Aorta (tissue), 5 donors: ENCODE measurements at regions of chr7 and their contacts with region 1.

Region 1: GRCh38 chr7:90211391-90212148 is at the start of gene STEAP2:
- DNase-seq: peak; percentile 94 to 97
- ATAC-seq: peak; percentile 99
- H3K4me3 ChIP-seq: peak within 1 kb of the TSS; percentile 49 to 55
- H3K27ac ChIP-seq: peak within 1 kb of the TSS; percentile 20 to 79
- H3K4me1 ChIP-seq: peaks cover 0 to 2% of the 10 kb centered on the region in 2 donors
- H3K27me3 ChIP-seq: no peaks in the 10 kb centered on the region
- total RNA-seq, gene STEAP2: 36.2 to 73.2 TPM

Region 2: DNA sequence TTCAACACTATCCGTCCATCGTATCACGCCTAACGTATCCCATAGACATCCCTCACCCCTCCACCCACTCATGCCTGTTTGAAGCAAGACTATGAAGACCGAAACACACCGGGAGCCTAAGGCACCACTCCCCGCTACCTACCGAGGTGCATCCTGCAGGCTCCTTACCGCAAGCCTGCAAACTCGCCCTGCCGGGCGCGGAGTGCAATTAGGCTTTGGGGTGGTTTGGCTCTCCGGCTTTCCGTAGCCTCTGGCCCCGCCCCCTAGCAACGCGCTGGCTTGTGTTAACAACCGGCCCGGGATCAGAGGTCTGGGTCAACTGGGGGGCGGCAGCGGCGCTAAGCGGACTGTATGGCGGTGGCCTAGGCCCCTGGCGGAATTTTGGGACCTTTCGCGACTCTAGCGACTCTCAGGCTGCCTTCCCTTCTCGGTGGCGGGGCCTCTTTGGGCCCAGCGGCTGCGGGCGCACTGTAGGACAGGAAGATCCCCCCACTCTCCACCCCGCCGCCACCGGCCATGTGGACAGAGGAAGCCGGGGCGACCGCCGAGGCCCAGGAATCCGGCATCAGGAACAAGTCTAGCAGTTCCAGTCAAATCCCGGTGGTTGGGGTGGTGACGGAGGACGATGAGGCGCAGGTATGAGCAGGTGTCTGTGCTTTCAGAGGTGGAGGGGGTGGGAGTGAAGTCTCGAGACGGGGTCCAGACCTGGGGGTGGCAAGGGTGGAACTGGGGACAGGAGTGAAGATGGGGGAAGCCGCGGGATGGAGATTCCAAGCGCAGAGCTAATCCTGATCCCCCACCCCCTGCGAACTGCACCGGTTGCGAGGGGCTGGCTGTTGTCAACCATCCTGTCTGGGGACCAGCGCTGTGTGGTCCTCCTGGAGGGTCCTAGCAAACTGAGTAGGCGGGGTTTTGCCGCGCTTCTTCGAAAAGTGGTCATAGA is 33.6 kb after region 1 on chr7 and contains the start of gene CFAP69:
- intact Hi-C with region 1: loop called (anchors 2 to 5 kb)
- DNase-seq: peak; percentile 94 to 97
- ATAC-seq: peak; percentile 98
- H3K4me3 ChIP-seq: peak within 1 kb of the TSS; percentile 71
- H3K27ac ChIP-seq: no peak within 1 kb of the TSS
- H3K4me1 ChIP-seq: peaks cover 0 to 3% of the 10 kb centered on the region in 2 donors
- H3K27me3 ChIP-seq: no peaks in the 10 kb centered on the region
- total RNA-seq, gene CFAP69: 11.4 to 15.8 TPM

Region 3: DNA sequence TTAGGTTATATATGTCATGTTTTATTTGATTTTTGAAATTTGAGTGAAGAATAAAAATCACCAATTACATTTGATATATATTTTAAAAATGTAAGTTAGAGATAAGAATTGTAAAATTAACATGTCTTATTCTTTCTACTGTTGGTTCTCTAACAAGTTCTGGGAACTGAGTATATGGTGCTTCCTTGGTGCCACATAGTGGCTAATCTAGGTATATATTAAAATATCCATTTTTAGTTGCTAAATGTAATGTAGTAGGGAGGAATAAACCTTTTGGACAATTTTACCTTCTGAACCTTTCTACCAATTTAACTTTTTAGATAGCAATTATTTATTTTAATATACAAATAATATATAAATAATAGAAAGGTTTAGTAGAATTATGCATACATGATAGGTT is 50.9 kb after region 1 on chr7:
- intact Hi-C with region 1: loop called in 1 of 2 experiments (anchors 2 kb)
- DNase-seq: no peak
- ATAC-seq: no peak
- H3K4me3 ChIP-seq: no peak overlapping the region
- H3K27ac ChIP-seq: no peak overlapping the region
- H3K4me1 ChIP-seq: peaks cover 0 to 4% of the 10 kb centered on the region in 2 donors
- H3K27me3 ChIP-seq: no peaks in the 10 kb centered on the region

Region 4: DNA sequence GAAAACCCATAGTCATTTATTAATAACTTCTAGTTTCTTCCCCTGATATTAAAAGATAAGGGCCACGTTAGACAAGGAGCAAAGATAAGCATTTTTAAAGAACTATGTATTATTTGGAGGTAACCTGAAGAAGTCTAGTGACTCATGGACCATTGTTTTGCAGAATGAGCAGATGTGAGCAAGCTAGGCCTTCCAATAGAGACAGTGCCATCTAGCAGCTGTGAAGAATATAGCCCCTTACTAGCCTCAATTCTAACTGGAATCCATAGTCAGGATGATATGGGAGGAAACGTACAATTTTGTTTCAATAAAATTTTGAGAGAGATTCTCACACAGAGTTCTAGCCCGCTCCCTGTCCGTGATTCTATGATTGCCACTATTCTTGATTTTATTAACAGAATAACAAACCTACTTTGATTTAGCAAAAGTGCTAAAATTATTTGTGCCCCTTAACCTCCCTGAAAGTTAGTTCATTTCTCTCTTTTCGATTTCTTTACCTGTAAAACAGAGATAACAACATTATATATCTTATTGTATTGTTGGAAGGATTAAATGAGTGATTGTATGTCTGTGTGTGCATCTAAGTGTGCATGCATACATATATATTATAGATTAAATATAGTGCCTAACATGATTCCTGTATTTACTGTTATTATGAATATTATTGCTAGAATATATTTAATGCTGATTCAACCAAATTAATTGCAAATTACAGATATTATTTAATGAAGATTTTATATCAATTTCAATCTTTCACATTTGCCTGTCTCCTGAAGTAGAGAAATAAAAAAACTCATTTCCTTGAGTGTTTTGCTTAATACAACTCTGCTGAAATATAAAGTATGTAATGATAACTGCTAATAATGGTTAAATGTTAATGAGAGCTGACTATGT is 86.8 kb after region 1 on chr7:
- intact Hi-C with region 1: no loop called
- DNase-seq: no peak
- ATAC-seq: peak; percentile 74
- H3K4me3 ChIP-seq: no peak overlapping the region
- H3K27ac ChIP-seq: no peak overlapping the region
- H3K4me1 ChIP-seq: no peaks in the 10 kb centered on the region
- H3K27me3 ChIP-seq: no peaks in the 10 kb centered on the region

Region 5: GRCh38 chr7:90403174-90404113 is 191.9 kb after region 1 on chr7 and contains the start of gene CLDN12:
- intact Hi-C with region 1: no loop called
- DNase-seq: peak; percentile 88 to 93
- ATAC-seq: peak; percentile 96
- H3K4me3 ChIP-seq: peak within 1 kb of the TSS; percentile 71 to 94
- H3K27ac ChIP-seq: peak within 1 kb of the TSS; percentile 55 to 70
- H3K4me1 ChIP-seq: peaks cover 0 to 3% of the 10 kb centered on the region in 2 donors
- H3K27me3 ChIP-seq: no peaks in the 10 kb centered on the region
- total RNA-seq, gene CLDN12: 29.0 to 35.1 TPM

Region 6: DNA sequence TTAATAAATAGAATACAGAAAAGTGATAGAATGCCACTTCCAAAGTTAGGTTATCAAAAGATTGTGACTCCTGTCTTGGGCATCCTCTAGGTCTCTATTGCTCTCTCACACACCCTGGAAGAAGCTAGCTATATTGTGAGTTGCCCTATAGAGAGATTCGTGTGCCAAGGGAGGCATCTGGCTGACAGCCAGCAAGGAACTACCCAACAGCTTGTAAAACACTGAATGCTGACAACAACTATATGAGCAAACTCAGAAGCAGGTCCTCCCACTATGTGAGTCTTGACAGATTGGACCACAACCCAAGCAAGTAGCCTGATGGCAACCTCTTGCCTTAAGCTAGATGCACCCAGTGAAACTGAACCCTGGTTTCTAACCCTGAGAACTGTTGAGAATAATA is 328.8 kb after region 1 on chr7:
- intact Hi-C with region 1: no loop called
- DNase-seq: no peak
- ATAC-seq: no peak
- H3K4me3 ChIP-seq: no peak overlapping the region
- H3K27ac ChIP-seq: no peak overlapping the region
- H3K4me1 ChIP-seq: no peaks in the 10 kb centered on the region
- H3K27me3 ChIP-seq: no peaks in the 10 kb centered on the region